Ovary (tissue), 10 donors: ENCODE measurements at regions of chr2 and their contacts with region 1.

Region 1: GRCh38 chr2:168773719-168774521 is 28.5 kb upstream of the NOSTRIN start:
- DNase-seq: peak; percentile 60 to 79 (median 71)
- H3K4me3 ChIP-seq: no peak overlapping the region
- H3K27ac ChIP-seq: no peak overlapping the region
- H3K4me1 ChIP-seq: no peaks in the 10 kb centered on the region
- H3K27me3 ChIP-seq: no peaks in the 10 kb centered on the region
- CTCF ChIP-seq: peak; percentile 55 to 65 (median 58)
- EP300 ChIP-seq: no peak
- POLR2A ChIP-seq: no peak

Region 2: DNA sequence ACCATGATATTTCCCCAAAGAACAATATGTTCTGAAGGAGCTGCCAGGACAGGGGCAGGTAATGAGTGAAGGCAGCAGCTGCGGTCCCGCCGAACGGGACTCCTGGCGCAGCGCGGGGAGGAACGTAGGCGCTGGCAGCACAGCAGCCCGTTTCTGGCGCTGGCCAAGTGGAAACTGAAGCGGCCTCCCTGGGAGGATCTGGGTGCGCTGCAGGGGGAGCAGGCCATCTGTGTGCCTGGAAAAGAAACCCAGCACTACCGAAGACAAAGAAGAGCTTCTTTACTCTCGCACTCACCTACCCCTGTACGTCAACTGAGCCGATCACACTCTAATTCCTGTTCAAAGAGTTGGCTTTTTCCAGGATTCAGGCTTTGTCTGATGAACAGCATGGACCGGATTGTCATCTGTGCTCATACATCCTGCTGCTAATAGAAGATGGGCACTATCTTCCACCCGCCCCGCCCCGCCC is 139.0 kb after region 1 on chr2:
- intact Hi-C with region 1: loop called in 1 of 4 experiments (anchors 10 kb)
- DNase-seq: peak; percentile 27 to 78 (median 53)
- H3K4me3 ChIP-seq: no peak overlapping the region
- H3K27ac ChIP-seq: no peak overlapping the region
- H3K4me1 ChIP-seq: peaks cover 2% of the 10 kb centered on the region
- H3K27me3 ChIP-seq: no peaks in the 10 kb centered on the region
- CTCF ChIP-seq: no peak
- EP300 ChIP-seq: no peak
- POLR2A ChIP-seq: no peak